ENCODE measurements at regions of chr6 and their contacts with region 1.

Region 1: GRCh38 chr6:118800394-118801071 is 93.4 kb upstream of the ASF1A start:
- DNase-seq: peak; percentile 85
- ATAC-seq: peak; percentile 99
- H3K4me3 ChIP-seq: no peak overlapping the region
- H3K27ac ChIP-seq: no peak overlapping the region
- H3K4me1 ChIP-seq: no peaks in the 10 kb centered on the region
- H3K27me3 ChIP-seq: no peaks in the 10 kb centered on the region
- CTCF ChIP-seq: peak; percentile 85
- POLR2A ChIP-seq: no peak
- RAD21 ChIP-seq: peak; percentile 71

Region 2: GRCh38 chr6:117317261-117317660 is 1483.3 kb before region 1 on chr6:
- CTCF ChIA-PET with region 1: no interaction called
- POLR2A ChIA-PET with region 1: no interaction called
- dilution Hi-C with region 1: no loop called
- in situ Hi-C with region 1: no loop called
- intact Hi-C with region 1: no loop called
- DNase-seq: peak; percentile 6
- ATAC-seq: no peak
- H3K4me3 ChIP-seq: no peak overlapping the region
- H3K27ac ChIP-seq: no peak overlapping the region
- H3K4me1 ChIP-seq: no peaks in the 10 kb centered on the region
- H3K27me3 ChIP-seq: no peaks in the 10 kb centered on the region
- CTCF ChIP-seq: 0 out of 2 replicates have a peak, but pooled peaks have one; percentile 26
- POLR2A ChIP-seq: no peak
- RAD21 ChIP-seq: peak; percentile 15; the same call in 1 of the 2 replicates

Region 3: GRCh38 chr6:118514689-118515088 is 285.8 kb before region 1 on chr6:
- CTCF ChIA-PET with region 1: interaction called, 3 read pairs
- POLR2A ChIA-PET with region 1: no interaction called
- dilution Hi-C with region 1: no loop called
- in situ Hi-C with region 1: no loop called
- intact Hi-C with region 1: loop called (anchors 5 kb)
- DNase-seq: no peak
- ATAC-seq: no peak
- H3K4me3 ChIP-seq: no peak overlapping the region
- H3K27ac ChIP-seq: no peak overlapping the region
- H3K4me1 ChIP-seq: no peaks in the 10 kb centered on the region
- H3K27me3 ChIP-seq: no peaks in the 10 kb centered on the region
- CTCF ChIP-seq: no peak
- POLR2A ChIP-seq: no peak
- RAD21 ChIP-seq: no peak

Region 4: GRCh38 chr6:118542184-118542952 is 258.2 kb before region 1 on chr6:
- CTCF ChIA-PET with region 1: no interaction called
- POLR2A ChIA-PET with region 1: no interaction called
- dilution Hi-C with region 1: no loop called
- in situ Hi-C with region 1: no loop called
- intact Hi-C with region 1: no loop called
- DNase-seq: peak; percentile 85
- ATAC-seq: peak; percentile 64
- H3K4me3 ChIP-seq: no peak overlapping the region
- H3K27ac ChIP-seq: no peak overlapping the region
- H3K4me1 ChIP-seq: no peaks in the 10 kb centered on the region
- H3K27me3 ChIP-seq: no peaks in the 10 kb centered on the region
- CTCF ChIP-seq: no peak
- POLR2A ChIP-seq: no peak
- RAD21 ChIP-seq: no peak

Region 5: DNA sequence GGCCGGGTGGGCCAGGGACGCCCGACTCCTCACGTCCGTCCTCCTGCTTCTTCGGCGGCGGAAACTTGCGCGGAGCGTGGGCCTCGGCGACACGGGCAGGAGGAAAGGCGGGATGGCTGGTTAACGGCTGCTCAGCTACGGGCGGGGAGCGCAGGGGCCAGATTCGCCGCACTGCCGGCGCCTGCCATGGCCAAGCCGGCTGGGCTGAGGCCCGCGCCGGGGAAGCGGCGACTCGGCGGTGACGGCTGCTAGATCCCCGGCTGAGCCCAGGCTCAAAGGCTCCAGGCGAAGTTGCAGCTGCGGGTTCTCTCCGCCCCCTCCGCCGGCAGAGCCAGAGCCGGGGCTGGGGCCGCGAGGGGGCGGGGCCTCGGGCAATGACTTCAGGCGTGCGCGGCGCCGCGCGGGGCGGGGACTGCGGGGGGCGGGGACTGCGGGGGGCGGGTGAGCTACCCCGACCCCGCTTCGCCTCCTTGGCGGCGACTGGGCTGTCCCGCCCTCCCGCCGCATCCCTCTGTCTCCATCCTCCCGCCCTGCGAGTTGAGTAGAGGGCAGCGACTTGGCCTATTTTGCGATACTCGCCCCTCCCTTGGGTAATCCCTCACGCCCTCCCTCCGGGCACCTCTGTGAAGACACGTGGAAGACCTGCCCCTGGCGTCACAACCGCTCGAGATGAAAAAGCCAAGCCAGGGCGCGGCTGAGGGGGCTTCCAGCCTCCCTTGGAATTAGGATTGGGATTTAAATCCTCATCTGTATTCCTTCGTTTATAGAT is 149.1 kb before region 1 on chr6 and contains the start of gene CEP85L:
- CTCF ChIA-PET with region 1: no interaction called
- POLR2A ChIA-PET with region 1: no interaction called
- dilution Hi-C with region 1: no loop called
- in situ Hi-C with region 1: no loop called
- intact Hi-C with region 1: loop called (anchors 1 kb)
- DNase-seq: peak; percentile 86
- ATAC-seq: peak; percentile 95
- H3K4me3 ChIP-seq: peak within 1 kb of the TSS; percentile 98
- H3K27ac ChIP-seq: peak within 1 kb of the TSS; percentile 99
- H3K4me1 ChIP-seq: no peaks in the 10 kb centered on the region
- H3K27me3 ChIP-seq: no peaks in the 10 kb centered on the region
- CTCF ChIP-seq: no peak
- POLR2A ChIP-seq: peak; percentile 82
- RAD21 ChIP-seq: no peak
- total RNA-seq, gene CEP85L: 24.2 and 25.6 TPM in 2 replicates

Measured in IMR-90 (cell line).